ENCODE measurements at regions of chr6 and their contacts with region 1.

Region 1: GRCh38 chr6:35590622-35591066 is 77.9 kb upstream of the TULP1 start:
- H3K4me3 ChIP-seq: no peak overlapping the region
- H3K27ac ChIP-seq: no peak overlapping the region
- H3K4me1 ChIP-seq: no peaks in the 10 kb centered on the region
- CTCF ChIP-seq: no peak

Region 2: DNA sequence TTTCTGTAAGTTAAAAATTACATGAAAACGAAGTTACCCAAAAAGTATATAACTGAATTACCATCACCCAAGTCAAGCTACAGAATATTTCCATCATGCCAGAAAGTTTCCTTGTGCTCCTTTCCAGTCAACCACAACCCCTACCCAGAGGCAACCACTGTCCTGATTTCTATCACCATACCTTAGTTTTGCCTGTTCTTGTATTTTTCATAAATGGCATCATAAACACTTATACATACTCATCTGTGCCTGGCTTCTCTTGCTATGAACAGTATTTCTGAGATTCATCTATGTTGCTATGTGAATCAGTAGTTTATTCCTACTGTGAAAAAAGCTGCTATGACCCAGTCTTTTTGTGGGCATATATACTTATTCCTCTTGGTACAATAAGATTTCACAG is 90.7 kb after region 1 on chr6:
- CTCF ChIA-PET with region 1: interaction called, 11 read pairs
- POLR2A ChIA-PET with region 1: interaction called, 4 read pairs
- H3K4me3 ChIP-seq: no peak overlapping the region
- H3K27ac ChIP-seq: no peak overlapping the region
- H3K4me1 ChIP-seq: peaks cover 12% of the 10 kb centered on the region; the same call in 1 of the 2 replicates
- CTCF ChIP-seq: no peak

Measured in HEK293 (cell line).